CD4-positive, alpha-beta T cell (primary cell): ENCODE measurements at regions of chr9 and their contacts with region 1.

Region 1: DNA sequence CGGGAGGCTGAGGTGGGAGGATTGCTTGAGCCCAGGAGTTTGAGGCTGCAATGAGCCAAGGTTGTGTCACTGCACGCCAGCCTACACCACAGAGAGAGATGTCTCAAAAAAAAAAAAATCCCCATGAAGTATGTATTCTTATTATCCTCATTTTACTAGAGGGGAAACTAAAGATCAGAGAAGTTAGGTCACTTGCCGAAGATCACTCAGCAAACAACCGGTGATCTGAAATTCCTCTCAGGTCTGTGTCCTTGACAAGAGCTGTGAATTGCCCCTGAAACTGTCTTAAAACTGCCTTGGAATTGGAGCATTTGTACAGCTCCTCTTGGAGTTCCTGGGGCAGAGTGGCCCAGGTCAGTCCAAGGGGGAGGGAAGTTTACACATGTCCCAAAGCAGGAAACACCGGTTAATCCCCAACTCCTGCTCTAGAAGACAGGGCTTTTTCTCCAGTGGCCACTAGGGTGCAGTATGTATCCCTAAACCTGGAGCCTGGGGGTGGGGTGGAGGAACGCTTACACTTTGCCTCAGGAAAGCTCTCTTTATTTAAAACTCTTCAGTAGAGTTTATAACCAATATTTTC is 27.6 kb downstream of the AQP7 start:
- DNase-seq: peak; percentile 48 to 82 (median 62)
- ATAC-seq: peak; percentile 96
- H3K4me3 ChIP-seq: peak overlapping the region; percentile 17
- H3K4me3 Mint-ChIP-seq: peak overlapping the region; percentile 56
- H3K27ac ChIP-seq: no peak overlapping the region
- H3K27ac Mint-ChIP-seq: peak overlapping the region; percentile 45
- H3K4me1 ChIP-seq: peaks cover 8% of the 10 kb centered on the region
- H3K4me1 Mint-ChIP-seq: peaks cover 16% of the 10 kb centered on the region
- H3K27me3 ChIP-seq: no peaks in the 10 kb centered on the region
- H3K27me3 Mint-ChIP-seq: no peaks in the 10 kb centered on the region
- CTCF ChIP-seq: peak; percentile 86

Region 2: DNA sequence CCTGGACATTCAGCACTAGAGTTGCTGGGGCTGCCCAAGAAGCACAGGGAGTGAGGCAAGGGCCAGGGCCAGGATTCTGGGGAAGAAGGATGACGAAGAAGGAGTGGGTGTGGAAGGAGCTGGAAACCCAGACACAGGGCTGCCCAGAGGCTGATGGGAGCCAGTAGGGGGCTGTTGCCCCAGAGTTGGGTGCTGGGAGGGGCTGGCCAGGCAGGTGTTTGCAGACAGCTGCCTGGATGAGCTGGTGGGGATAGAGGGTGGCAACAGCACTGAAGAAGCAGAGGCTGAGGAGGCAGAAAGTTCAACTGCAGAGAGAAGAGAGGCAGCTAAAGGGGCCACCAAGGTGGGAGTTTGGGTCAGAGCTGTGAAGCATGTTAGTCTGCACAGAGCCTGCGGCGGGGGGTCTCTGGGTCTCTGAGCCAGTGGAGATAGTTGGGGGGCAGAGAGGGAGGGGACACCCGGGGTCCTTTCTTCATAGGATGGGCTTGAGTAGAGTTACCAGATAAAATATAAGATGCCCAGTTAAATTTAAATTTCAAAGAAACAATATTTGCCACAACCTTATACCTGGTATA is 30.2 kb after region 1 on chr9:
- CTCF ChIA-PET with region 1: no interaction called
- POLR2A ChIA-PET with region 1: no interaction called
- intact Hi-C with region 1: no loop called
- DNase-seq: peak in 1 of 14 experiments; percentile 11
- ATAC-seq: no peak
- H3K4me3 ChIP-seq: no peak overlapping the region
- H3K4me3 Mint-ChIP-seq: no peak overlapping the region
- H3K27ac ChIP-seq: no peak overlapping the region
- H3K27ac Mint-ChIP-seq: peak overlapping the region; percentile 45
- H3K4me1 ChIP-seq: peaks cover 14% of the 10 kb centered on the region
- H3K4me1 Mint-ChIP-seq: peaks cover 6% of the 10 kb centered on the region
- H3K27me3 ChIP-seq: no peaks in the 10 kb centered on the region
- H3K27me3 Mint-ChIP-seq: no peaks in the 10 kb centered on the region
- CTCF ChIP-seq: no peak

Region 3: GRCh38 chr9:33498387-33498786 is 123.7 kb after region 1 on chr9:
- CTCF ChIA-PET with region 1: no interaction called
- POLR2A ChIA-PET with region 1: no interaction called
- intact Hi-C with region 1: loop called in 1 of 2 experiments (anchors 2 kb)
- DNase-seq: peak in 2 of 14 experiments; percentile 15 to 21
- ATAC-seq: no peak
- H3K4me3 ChIP-seq: no peak overlapping the region
- H3K4me3 Mint-ChIP-seq: no peak overlapping the region
- H3K27ac ChIP-seq: no peak overlapping the region
- H3K27ac Mint-ChIP-seq: no peak overlapping the region
- H3K4me1 ChIP-seq: no peaks in the 10 kb centered on the region
- H3K4me1 Mint-ChIP-seq: no peaks in the 10 kb centered on the region
- H3K27me3 ChIP-seq: no peaks in the 10 kb centered on the region
- H3K27me3 Mint-ChIP-seq: no peaks in the 10 kb centered on the region
- CTCF ChIP-seq: peak; percentile 42

Region 4: GRCh38 chr9:33721674-33722358 is 347.1 kb after region 1 on chr9:
- CTCF ChIA-PET with region 1: interaction called, 3 read pairs
- POLR2A ChIA-PET with region 1: no interaction called
- intact Hi-C with region 1: loop called (anchors 2 to 10 kb)
- DNase-seq: peak; percentile 77 to 94 (median 86)
- ATAC-seq: peak; percentile 69
- H3K4me3 ChIP-seq: no peak overlapping the region
- H3K4me3 Mint-ChIP-seq: no peak overlapping the region
- H3K27ac ChIP-seq: no peak overlapping the region
- H3K27ac Mint-ChIP-seq: no peak overlapping the region
- H3K4me1 ChIP-seq: peaks cover 6% of the 10 kb centered on the region
- H3K4me1 Mint-ChIP-seq: no peaks in the 10 kb centered on the region
- H3K27me3 ChIP-seq: no peaks in the 10 kb centered on the region
- H3K27me3 Mint-ChIP-seq: peaks cover 15% of the 10 kb centered on the region
- CTCF ChIP-seq: peak; percentile 100